ENCODE measurements at regions of chr5 and their contacts with region 1.

Region 1: GRCh38 chr5:112737463-112738190 is at the start of gene APC:
- DNase-seq: peak; percentile 93 to 97 (median 95)
- ATAC-seq: peak; percentile 98 to 100 (median 100)
- H3K4me3 ChIP-seq: peak within 1 kb of the TSS; percentile 54 to 83 (median 64)
- H3K27ac ChIP-seq: peak within 1 kb of the TSS in 11 of 12 donors; percentile 41 to 82 (median 73)
- H3K4me1 ChIP-seq: peaks cover 0 to 46% (median 22%) of the 10 kb centered on the region in 12 donors
- H3K27me3 ChIP-seq: no peaks in the 10 kb centered on the region
- CTCF ChIP-seq: peak in 3 of 12 donors; percentile 9 to 24 (median 17)
- POLR2A ChIP-seq: peak in 1 of 2 donors; percentile 58
- total RNA-seq, gene APC: 34.0 to 65.3 (median 42.2) TPM

Region 2: GRCh38 chr5:112160652-112161391 is 576.8 kb before region 1 on chr5:
- intact Hi-C with region 1: loop called in 1 of 10 experiments (anchors 10 kb)
- DNase-seq: peak; percentile 90 to 95 (median 92)
- ATAC-seq: peak; percentile 88 to 95 (median 94)
- H3K4me3 ChIP-seq: peak overlapping the region; percentile 76 to 98 (median 82)
- H3K27ac ChIP-seq: peak overlapping the region; percentile 72 to 92 (median 86)
- H3K4me1 ChIP-seq: peaks cover 0 to 30% (median 18%) of the 10 kb centered on the region in 12 donors
- H3K27me3 ChIP-seq: no peaks in the 10 kb centered on the region
- CTCF ChIP-seq: peak; percentile 88 to 99 (median 96)
- POLR2A ChIP-seq: peak in 1 of 2 donors; percentile 79

Measured in heart left ventricle (tissue), 16 donors.